Activated naive CD4-positive, alpha-beta T cell treated with anti-CD3 and anti-CD28 coated beads for 36 hours (primary cell): ENCODE measurements at regions of chr6 and their contacts with region 1.

Region 1: GRCh38 chr6:53979468-53980067 is 131.7 kb upstream of the MLIP start:
- DNase-seq: peak; percentile 20
- H3K4me3 Mint-ChIP-seq: no peak overlapping the region
- H3K27ac Mint-ChIP-seq: no peak overlapping the region
- H3K4me1 Mint-ChIP-seq: no peaks in the 10 kb centered on the region
- H3K27me3 Mint-ChIP-seq: peaks cover 2% of the 10 kb centered on the region

Region 2: DNA sequence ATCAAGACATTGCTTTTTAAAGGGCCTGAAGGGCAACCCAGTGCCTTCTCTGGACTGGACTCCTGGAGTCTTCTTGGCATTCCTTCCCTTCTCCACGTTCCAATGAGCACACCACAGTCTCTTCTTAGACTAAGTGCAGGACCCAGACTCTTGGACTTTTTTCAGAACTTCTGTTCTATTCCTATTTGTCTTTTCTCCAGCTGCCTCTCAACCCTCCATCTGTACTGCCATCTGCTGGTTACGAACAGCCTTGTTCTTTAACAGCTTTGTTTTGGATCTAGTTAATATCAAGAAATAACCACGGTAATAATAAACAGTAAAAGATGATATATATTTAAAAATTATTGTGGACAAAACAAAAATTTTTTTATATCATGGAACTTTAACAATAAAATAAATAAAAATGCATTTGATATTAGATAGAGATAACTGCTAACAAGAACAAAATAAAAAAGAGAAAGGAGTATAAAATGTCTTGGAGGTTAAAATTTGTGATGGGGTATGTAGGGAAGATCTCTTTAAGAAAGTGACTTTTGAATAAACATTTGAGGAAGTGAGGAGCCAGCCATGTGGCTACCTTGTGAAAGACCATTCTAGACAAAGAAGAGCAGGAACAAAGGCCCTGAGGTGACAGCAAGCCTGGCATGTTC is 1089.7 kb after region 1 on chr6:
- CTCF ChIA-PET with region 1: no interaction called
- intact Hi-C with region 1: loop called (anchors 2 kb)
- DNase-seq: peak; percentile 6
- H3K4me3 Mint-ChIP-seq: no peak overlapping the region
- H3K27ac Mint-ChIP-seq: no peak overlapping the region
- H3K4me1 Mint-ChIP-seq: no peaks in the 10 kb centered on the region
- H3K27me3 Mint-ChIP-seq: no peaks in the 10 kb centered on the region

Region 3: DNA sequence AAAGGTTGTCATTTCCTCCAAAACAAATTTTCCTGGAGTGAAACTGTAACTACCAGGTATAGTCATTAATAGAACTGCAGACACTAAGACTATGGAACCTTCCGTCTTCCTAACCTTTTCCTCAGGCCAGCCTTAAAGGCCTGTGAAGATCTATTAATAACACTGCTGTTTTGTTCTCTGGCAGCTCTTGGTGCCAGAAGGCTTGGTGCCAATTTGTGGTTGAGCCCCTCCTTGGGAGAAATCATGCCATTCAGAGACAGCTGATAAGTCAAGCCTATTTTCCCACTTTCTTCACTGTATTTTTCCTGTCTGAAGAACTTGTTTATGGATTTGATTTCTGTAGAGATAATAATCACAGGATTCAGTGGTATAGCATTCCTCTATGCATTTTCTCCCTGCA is 1259.5 kb after region 1 on chr6:
- CTCF ChIA-PET with region 1: no interaction called
- intact Hi-C with region 1: loop called (anchors 5 kb)
- DNase-seq: no peak
- H3K4me3 Mint-ChIP-seq: no peak overlapping the region
- H3K27ac Mint-ChIP-seq: no peak overlapping the region
- H3K4me1 Mint-ChIP-seq: no peaks in the 10 kb centered on the region
- H3K27me3 Mint-ChIP-seq: no peaks in the 10 kb centered on the region